GM12878 (cell line): ENCODE measurements at regions of chr10 and their contacts with region 1.

Region 1: GRCh38 chr10:60200012-60200681 is 189.5 kb downstream of the ANK3 start:
- DNase-seq: no peak
- ATAC-seq: no peak
- H3K4me3 ChIP-seq: no peak overlapping the region
- H3K27ac ChIP-seq: no peak overlapping the region
- H3K4me1 ChIP-seq: no peaks in the 10 kb centered on the region
- H3K27me3 ChIP-seq: peaks cover 1 to 2% of the 10 kb centered on the region in 2 experiments; a peak in 3 of 4 replicates
- CTCF ChIP-seq: no peak
- EP300 ChIP-seq: no peak
- POLR2A ChIP-seq: no peak
- RAD21 ChIP-seq: no peak

Region 2: DNA sequence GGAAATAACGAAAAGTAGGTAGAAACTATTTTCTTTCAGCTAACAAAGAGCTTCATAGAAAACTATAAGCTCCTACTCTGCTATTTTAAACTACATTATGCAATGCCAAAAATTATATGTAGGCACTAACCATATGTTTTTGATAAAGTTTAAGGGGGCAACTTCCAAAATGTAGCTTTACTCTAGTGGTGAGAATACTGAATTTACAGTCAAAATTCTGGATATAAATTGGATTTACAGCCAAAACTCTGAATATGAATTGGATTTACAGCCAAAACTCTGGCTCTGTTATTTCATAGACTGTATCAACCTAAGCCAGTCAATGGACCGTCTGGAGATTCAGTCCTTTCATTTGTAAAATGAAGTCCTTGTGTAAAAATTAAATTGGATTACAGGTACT is 276.3 kb after region 1 on chr10:
- CTCF ChIA-PET with region 1: no interaction called
- POLR2A ChIA-PET with region 1: interaction called, 10 read pairs
- RAD21 ChIA-PET with region 1: no interaction called
- SMC1A ChIA-PET with region 1: no interaction called
- in situ Hi-C with region 1: no loop called
- intact Hi-C with region 1: no loop called
- DNase-seq: no peak
- ATAC-seq: no peak
- H3K4me3 ChIP-seq: no peak overlapping the region
- H3K27ac ChIP-seq: no peak overlapping the region
- H3K4me1 ChIP-seq: no peaks in the 10 kb centered on the region
- H3K27me3 ChIP-seq: no peaks in the 10 kb centered on the region
- CTCF ChIP-seq: no peak
- EP300 ChIP-seq: no peak
- POLR2A ChIP-seq: no peak
- RAD21 ChIP-seq: no peak